Activated CD4-positive, alpha-beta memory T cell treated with anti-CD3 and anti-CD28 coated beads, Interleukin-2, amount 10 ng/mL, durations not matched to agents 7 days and 5 days (primary cell): ENCODE measurements at regions of chr9 and their contacts with region 1.

Region 1: DNA sequence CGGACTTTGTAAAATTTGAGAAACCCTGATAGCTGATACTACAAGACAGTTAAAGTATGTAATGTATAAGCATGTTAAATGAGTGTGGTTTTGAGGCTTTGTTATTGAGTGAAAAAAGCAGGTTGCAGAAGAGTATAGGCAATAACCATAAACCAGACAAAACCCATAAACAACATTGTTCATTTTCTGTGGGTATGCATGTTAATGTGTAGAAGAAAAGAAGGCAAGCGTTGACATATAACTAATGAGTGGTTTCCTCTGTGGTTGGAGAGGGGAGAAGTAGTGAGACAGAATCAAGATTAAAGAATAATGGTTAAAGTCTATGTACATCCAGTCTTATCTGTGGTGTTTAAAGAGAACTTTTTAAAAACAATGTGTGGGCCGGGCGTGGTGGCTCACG is 26.2 kb downstream of the RAD23B start:
- DNase-seq: no peak
- H3K4me3 Mint-ChIP-seq: no peak overlapping the region
- H3K27ac Mint-ChIP-seq: peak overlapping the region; percentile 56
- H3K4me1 Mint-ChIP-seq: peaks cover 49% of the 10 kb centered on the region
- H3K27me3 Mint-ChIP-seq: no peaks in the 10 kb centered on the region

Region 2: DNA sequence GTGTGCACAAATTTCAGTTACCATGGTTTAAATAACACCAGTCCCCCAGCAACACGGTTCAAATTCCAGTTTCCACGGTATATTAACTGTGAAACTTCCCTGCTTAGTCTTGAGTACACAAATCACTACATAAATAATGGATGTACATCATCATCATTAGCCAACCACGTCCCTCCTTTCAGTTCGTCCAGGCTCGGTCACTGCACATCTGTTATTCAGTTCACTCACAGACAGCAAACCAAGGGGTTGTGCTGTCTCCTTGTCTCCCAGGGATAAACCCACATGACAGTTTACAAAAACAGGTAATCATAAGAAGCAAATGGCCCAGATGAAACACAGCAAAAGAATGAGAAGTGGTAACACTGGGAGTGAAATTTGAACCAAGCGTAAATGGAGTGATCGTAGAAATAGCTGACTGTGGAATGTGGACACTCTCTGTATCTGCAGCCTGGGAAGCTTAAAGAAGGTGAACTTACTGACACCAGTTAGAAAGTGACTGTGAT is 87.2 kb before region 1 on chr9:
- CTCF ChIA-PET with region 1: no interaction called
- POLR2A ChIA-PET with region 1: no interaction called
- DNase-seq: no peak
- H3K4me3 Mint-ChIP-seq: no peak overlapping the region
- H3K27ac Mint-ChIP-seq: no peak overlapping the region
- H3K4me1 Mint-ChIP-seq: no peaks in the 10 kb centered on the region
- H3K27me3 Mint-ChIP-seq: peaks cover 21% of the 10 kb centered on the region

Region 3: GRCh38 chr9:107269681-107270080 is 39.6 kb before region 1 on chr9:
- CTCF ChIA-PET with region 1: no interaction called
- POLR2A ChIA-PET with region 1: no interaction called
- DNase-seq: no peak
- H3K4me3 Mint-ChIP-seq: no peak overlapping the region
- H3K27ac Mint-ChIP-seq: no peak overlapping the region
- H3K4me1 Mint-ChIP-seq: peaks cover 2% of the 10 kb centered on the region
- H3K27me3 Mint-ChIP-seq: peaks cover 7% of the 10 kb centered on the region

Region 4: GRCh38 chr9:107282753-107283625 is 26.3 kb before region 1 on chr9 and contains the start of gene RAD23B:
- CTCF ChIA-PET with region 1: interaction called, 4 read pairs
- POLR2A ChIA-PET with region 1: interaction called, 18 read pairs
- DNase-seq: peak; percentile 97
- H3K4me3 Mint-ChIP-seq: peak within 1 kb of the TSS; percentile 91
- H3K27ac Mint-ChIP-seq: peak within 1 kb of the TSS; percentile 95
- H3K4me1 Mint-ChIP-seq: peaks cover 43% of the 10 kb centered on the region
- H3K27me3 Mint-ChIP-seq: peaks cover 8% of the 10 kb centered on the region
- total RNA-seq, gene RAD23B: 89.4 to 91.0 TPM

Region 5: GRCh38 chr9:107438211-107439090 is 129.2 kb after region 1 on chr9:
- CTCF ChIA-PET with region 1: no interaction called
- POLR2A ChIA-PET with region 1: no interaction called
- DNase-seq: no peak
- H3K4me3 Mint-ChIP-seq: no peak overlapping the region
- H3K27ac Mint-ChIP-seq: no peak overlapping the region
- H3K4me1 Mint-ChIP-seq: no peaks in the 10 kb centered on the region
- H3K27me3 Mint-ChIP-seq: no peaks in the 10 kb centered on the region

Region 6: GRCh38 chr9:107576962-107577776 is 267.9 kb after region 1 on chr9:
- CTCF ChIA-PET with region 1: no interaction called
- POLR2A ChIA-PET with region 1: no interaction called
- DNase-seq: no peak
- H3K4me3 Mint-ChIP-seq: no peak overlapping the region
- H3K27ac Mint-ChIP-seq: no peak overlapping the region
- H3K4me1 Mint-ChIP-seq: no peaks in the 10 kb centered on the region
- H3K27me3 Mint-ChIP-seq: no peaks in the 10 kb centered on the region